CD8-positive, alpha-beta T cell (primary cell): ENCODE measurements at regions of chr5 and their contacts with region 1.

Region 1: GRCh38 chr5:66633795-66634194 is 37.6 kb downstream of the MAST4 start:
- DNase-seq: no peak
- ATAC-seq: no peak
- H3K4me3 ChIP-seq: no peak overlapping the region
- H3K4me3 Mint-ChIP-seq: no peak overlapping the region
- H3K27ac ChIP-seq: no peak overlapping the region
- H3K27ac Mint-ChIP-seq: no peak overlapping the region
- H3K4me1 ChIP-seq: no peaks in the 10 kb centered on the region
- H3K4me1 Mint-ChIP-seq: no peaks in the 10 kb centered on the region
- H3K27me3 ChIP-seq: no peaks in the 10 kb centered on the region
- H3K27me3 Mint-ChIP-seq: no peaks in the 10 kb centered on the region
- CTCF ChIP-seq: no peak

Region 2: GRCh38 chr5:66565878-66566277 is 67.9 kb before region 1 on chr5:
- CTCF ChIA-PET with region 1: no interaction called
- POLR2A ChIA-PET with region 1: no interaction called
- intact Hi-C with region 1: no loop called
- DNase-seq: no peak
- ATAC-seq: no peak
- H3K4me3 ChIP-seq: no peak overlapping the region
- H3K4me3 Mint-ChIP-seq: no peak overlapping the region
- H3K27ac ChIP-seq: no peak overlapping the region
- H3K27ac Mint-ChIP-seq: no peak overlapping the region
- H3K4me1 ChIP-seq: no peaks in the 10 kb centered on the region
- H3K4me1 Mint-ChIP-seq: peaks cover 2% of the 10 kb centered on the region
- H3K27me3 ChIP-seq: no peaks in the 10 kb centered on the region
- H3K27me3 Mint-ChIP-seq: no peaks in the 10 kb centered on the region
- CTCF ChIP-seq: no peak

Region 3: GRCh38 chr5:67289763-67290521 is 656.1 kb after region 1 on chr5:
- CTCF ChIA-PET with region 1: no interaction called
- POLR2A ChIA-PET with region 1: no interaction called
- intact Hi-C with region 1: loop called in 1 of 2 experiments (anchors 10 kb)
- DNase-seq: no peak
- ATAC-seq: no peak
- H3K4me3 ChIP-seq: no peak overlapping the region
- H3K4me3 Mint-ChIP-seq: no peak overlapping the region
- H3K27ac ChIP-seq: no peak overlapping the region
- H3K27ac Mint-ChIP-seq: no peak overlapping the region
- H3K4me1 ChIP-seq: no peaks in the 10 kb centered on the region
- H3K4me1 Mint-ChIP-seq: no peaks in the 10 kb centered on the region
- H3K27me3 ChIP-seq: no peaks in the 10 kb centered on the region
- H3K27me3 Mint-ChIP-seq: no peaks in the 10 kb centered on the region
- CTCF ChIP-seq: no peak